ENCODE measurements at regions of chr7 and their contacts with region 1.

Region 1: DNA sequence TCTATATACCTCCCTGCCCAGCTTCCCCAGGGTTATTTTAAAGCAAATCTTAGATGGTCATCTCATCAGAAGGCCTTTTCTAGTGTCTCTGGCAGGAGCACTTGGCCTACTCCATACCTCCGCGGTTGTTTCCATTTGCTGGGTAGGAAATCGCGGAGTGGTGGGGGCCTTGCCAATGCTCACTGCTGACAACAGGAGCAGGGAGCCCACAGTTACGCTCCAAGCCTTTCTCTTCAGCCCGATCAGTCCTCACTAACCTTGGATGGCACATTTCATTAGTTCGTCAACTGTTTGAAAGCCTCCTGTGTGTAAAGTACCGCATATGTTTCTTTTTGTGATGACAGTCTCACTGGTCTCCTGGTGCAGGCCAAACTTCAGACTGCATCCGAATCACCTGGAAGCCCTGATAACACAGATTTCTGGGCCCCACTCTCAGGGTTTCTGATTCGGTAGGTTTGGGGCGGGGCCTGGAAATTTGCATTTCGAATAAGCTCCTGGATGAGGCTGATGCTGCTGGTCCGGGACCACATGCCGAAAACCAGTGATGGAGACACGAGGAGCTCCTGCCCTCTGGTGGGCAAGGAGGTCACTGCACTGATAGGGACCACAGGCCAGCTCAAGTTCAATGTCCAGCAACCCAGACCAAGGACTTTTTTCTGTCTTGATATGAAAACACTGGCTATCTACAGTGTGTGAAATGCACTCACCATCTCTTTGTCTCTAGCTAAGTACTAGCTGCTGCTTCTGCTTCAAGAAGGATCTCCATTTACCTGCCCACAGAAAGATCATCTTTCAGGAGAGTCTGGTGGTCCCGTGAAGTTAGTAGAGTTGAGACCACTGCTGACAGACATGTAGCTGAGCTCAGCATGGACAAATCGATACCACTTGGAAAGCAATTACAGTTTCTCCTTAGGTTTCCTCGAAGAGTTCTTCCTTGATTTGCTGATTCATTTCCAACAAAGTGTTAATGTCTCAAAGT is 14.0 kb downstream of the LRGUK start:
- DNase-seq: peak; percentile 66
- ATAC-seq: peak; percentile 61
- H3K4me3 Mint-ChIP-seq: no peak overlapping the region
- H3K27ac Mint-ChIP-seq: no peak overlapping the region
- H3K4me1 Mint-ChIP-seq: peaks cover 2% of the 10 kb centered on the region
- H3K27me3 Mint-ChIP-seq: peaks cover 1% of the 10 kb centered on the region

Region 2: DNA sequence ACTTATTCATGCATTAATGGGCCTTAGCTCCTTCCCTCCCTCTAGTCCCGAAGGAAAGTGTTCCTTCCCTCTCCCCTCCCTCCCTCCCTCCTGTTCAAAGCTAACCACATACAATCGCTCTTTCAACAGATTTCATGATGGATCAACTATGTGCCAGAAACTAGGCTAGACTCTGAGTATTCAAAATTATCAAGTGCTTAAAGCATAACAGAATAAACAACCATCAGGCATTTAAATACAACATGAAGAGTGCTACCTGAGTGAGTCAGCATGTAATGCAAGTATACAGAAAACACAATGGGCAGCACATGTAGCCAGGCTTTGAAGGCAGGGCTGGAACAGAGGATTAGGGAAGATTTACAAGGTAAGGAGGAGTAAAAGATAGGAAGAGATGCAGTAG is 1070.6 kb before region 1 on chr7:
- CTCF ChIA-PET with region 1: no interaction called
- DNase-seq: no peak
- ATAC-seq: no peak
- H3K4me3 Mint-ChIP-seq: no peak overlapping the region
- H3K27ac Mint-ChIP-seq: no peak overlapping the region
- H3K4me1 Mint-ChIP-seq: peaks cover 2% of the 10 kb centered on the region
- H3K27me3 Mint-ChIP-seq: no peaks in the 10 kb centered on the region

Region 3: GRCh38 chr7:133936074-133936473 is 205.1 kb before region 1 on chr7:
- CTCF ChIA-PET with region 1: no interaction called
- DNase-seq: no peak
- ATAC-seq: no peak
- H3K4me3 Mint-ChIP-seq: no peak overlapping the region
- H3K27ac Mint-ChIP-seq: no peak overlapping the region
- H3K4me1 Mint-ChIP-seq: no peaks in the 10 kb centered on the region
- H3K27me3 Mint-ChIP-seq: no peaks in the 10 kb centered on the region

Region 4: GRCh38 chr7:134126966-134127848 is 14.0 kb before region 1 on chr7 and contains the start of gene LRGUK:
- CTCF ChIA-PET with region 1: interaction called, 19 read pairs
- DNase-seq: peak; percentile 87
- ATAC-seq: peak; percentile 100
- H3K4me3 Mint-ChIP-seq: peak within 1 kb of the TSS; percentile 71
- H3K27ac Mint-ChIP-seq: no peak within 1 kb of the TSS
- H3K4me1 Mint-ChIP-seq: peaks cover 12% of the 10 kb centered on the region
- H3K27me3 Mint-ChIP-seq: peaks cover 42% of the 10 kb centered on the region
- total RNA-seq, gene LRGUK: 0.18 to 0.19 TPM

Region 5: DNA sequence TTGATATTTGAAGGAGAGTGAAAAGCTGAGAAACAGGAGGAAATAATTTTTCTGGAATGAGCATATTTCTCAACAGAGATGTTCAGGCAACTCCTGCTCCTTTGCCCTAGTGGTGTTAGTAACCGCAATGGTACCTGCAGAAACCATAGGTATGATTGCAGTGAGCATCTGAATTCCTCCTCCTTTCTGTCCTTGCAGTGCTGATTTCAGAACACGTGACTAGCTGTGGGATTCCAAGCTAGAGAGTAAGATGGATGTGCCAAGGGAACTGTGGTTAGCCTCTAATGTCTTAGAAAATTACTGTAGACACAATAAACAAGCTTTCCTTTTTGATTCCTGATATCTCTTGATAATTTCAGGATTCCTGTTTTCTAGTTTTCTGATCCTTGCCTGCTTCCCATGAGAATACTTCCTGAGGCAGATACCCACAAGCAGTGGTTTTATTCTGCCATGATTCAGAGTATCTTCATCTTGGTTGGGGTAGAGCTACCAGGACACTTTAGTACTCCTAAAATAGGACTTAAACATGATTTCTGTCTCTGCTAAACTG is 13.5 kb after region 1 on chr7:
- CTCF ChIA-PET with region 1: interaction called, 10 read pairs
- DNase-seq: no peak
- ATAC-seq: no peak
- H3K4me3 Mint-ChIP-seq: no peak overlapping the region
- H3K27ac Mint-ChIP-seq: no peak overlapping the region
- H3K4me1 Mint-ChIP-seq: peaks cover 8% of the 10 kb centered on the region
- H3K27me3 Mint-ChIP-seq: peaks cover 20% of the 10 kb centered on the region